ENCODE measurements at regions of chr10 and their contacts with region 1.

Region 1: DNA sequence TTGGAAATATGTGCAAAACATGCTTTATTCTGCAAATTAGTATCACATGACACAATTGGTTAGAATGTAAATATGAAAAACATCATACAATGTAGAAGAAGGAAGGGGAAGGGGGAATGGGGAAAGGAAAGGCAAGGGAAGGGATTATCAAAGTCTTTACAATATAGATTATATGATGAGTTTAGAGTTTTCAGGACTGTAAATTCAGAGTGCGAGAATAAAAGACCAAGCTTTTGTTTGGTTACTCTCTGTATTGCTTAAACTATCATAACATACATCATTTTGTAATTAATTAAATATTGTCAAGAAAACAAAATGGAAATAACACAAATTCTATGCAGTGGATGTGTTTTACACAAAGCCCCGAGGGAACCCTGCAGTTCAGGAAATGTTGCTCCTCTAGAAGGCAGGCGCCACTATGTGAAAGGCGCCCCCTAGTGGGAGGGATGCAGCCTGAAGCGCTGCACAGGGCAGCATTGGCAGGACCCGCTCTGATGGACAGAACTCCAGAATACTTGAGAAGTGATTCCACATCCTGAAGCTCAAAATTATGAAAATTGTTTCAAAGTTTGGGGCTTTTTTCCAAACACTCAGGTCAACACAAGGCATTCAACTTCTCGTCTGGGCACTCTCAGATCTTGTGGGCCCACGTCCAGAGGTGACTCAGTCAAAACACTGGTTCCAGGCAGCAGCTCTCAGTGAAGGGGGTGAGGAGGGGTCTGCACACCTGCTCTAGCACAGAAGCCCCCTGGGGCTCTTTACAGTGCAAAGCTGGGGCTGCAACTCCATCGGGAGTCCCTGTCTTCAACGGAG is 31.6 kb upstream of the TMEM254 start:
- H3K4me3 ChIP-seq: no peak overlapping the region
- H3K27ac ChIP-seq: no peak overlapping the region
- H3K4me1 ChIP-seq: no peaks in the 10 kb centered on the region
- CTCF ChIP-seq: peak; percentile 32; the same call in 1 of the 2 replicates

Region 2: DNA sequence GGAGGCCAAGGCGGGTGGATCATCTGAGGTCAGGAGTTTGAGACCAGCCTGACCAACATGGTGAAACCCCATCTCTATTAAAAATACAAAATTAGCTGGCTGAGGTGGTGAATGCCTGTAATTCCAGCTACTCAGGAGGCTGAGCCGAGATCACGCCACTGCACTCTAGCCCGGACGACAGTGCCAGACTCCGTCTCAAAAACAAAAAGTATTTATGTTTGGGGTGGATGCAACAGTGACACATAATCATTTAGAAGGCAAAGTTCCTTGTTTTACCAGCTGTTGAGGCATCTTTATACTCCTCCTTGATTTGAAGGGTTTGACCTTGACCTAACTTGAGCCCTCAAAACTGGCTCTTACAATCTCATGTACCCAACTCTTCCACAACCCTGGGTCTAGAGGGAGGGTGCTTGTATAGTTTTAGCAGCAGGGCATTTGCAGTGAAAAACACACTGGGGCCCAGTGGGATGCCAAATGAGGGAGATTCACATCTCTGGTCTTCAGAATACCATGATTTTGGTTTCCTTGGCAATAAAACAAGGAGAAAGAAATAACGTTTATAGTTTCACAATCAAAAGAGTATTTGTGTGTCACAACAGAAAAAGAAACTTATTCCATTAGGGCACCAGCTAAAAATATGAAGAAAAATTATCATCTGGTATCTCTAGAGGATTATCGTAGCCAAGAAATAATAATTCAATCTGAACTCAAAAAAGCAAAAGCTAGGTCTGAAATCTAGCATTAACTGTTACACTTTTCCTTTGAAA is 17.5 kb after region 1 on chr10:
- CTCF ChIA-PET with region 1: interaction called, 28 read pairs
- POLR2A ChIA-PET with region 1: no interaction called
- H3K4me3 ChIP-seq: no peak overlapping the region
- H3K27ac ChIP-seq: no peak overlapping the region
- H3K4me1 ChIP-seq: no peaks in the 10 kb centered on the region
- CTCF ChIP-seq: no peak

Region 3: DNA sequence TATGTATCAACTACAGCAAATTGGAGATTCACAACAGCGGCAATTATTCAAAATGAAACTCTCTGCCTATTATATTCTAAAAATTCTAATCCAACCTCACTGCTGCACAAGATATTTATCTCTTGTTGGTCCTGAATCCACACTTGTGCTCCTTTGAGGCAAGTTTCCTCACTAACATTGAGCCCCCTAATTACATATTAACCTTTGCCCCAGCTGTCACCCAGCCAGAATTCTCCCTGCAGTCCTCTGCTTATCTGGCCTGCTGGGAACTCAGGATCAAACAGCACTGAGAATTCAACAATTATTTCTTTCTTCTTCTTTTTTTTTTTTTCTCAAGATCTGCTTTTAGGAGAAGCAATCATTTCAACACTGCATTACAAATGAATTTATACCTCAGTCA is 64.2 kb after region 1 on chr10:
- CTCF ChIA-PET with region 1: no interaction called
- POLR2A ChIA-PET with region 1: no interaction called
- H3K4me3 ChIP-seq: no peak overlapping the region
- H3K27ac ChIP-seq: no peak overlapping the region
- H3K4me1 ChIP-seq: no peaks in the 10 kb centered on the region
- CTCF ChIP-seq: no peak

Region 4: GRCh38 chr10:80260295-80261243 is 213.7 kb after region 1 on chr10:
- CTCF ChIA-PET with region 1: no interaction called
- POLR2A ChIA-PET with region 1: no interaction called
- H3K4me3 ChIP-seq: no peak overlapping the region
- H3K27ac ChIP-seq: no peak overlapping the region
- H3K4me1 ChIP-seq: no peaks in the 10 kb centered on the region
- CTCF ChIP-seq: peak; percentile 41; the same call in 1 of the 2 replicates